ENCODE measurements at regions of chr2 and their contacts with region 1.

Region 1: DNA sequence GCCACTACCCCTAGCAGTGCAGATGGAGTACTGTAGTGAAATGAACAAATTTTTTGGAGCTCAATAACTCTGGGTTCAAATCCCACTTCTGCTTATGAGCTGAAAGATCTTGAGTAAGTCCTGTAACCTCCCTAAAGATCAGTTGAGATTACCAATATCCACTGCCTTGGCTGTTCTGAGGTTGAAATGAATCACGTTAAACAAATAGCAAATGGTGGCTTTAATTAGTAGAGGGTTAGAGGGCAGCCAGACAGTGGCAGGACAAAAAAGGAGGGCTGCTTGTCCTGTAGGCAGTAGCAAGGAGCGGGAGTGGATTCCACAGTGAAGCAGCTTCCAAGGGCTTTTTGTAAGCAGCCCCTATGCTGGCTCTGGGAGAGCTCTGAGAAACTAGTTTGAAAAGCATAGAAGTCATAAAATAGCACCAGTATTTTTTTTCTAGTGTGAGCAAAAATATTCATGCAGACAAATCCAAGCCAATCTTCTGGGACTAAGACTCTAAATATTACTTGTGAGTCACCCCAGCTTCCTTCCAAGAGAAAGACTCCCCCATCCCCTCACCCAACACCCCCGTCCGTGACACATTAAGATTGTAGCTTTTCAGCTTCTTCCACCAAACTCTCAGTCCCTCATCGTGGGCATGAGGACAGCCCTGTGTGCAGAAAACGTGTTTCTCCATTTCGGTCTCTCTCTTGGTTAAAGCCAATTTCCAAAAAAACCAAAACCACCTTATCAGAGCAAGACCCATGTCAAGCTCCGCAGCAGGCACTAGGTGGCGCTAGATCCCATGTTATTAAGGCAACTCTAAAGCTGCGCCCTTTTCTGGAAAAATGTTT is 123.5 kb upstream of the LGALSL start:
- DNase-seq: peak in 1 of 2 donors; percentile 88
- H3K4me3 ChIP-seq: peak overlapping the region; percentile 42 to 47
- H3K27ac ChIP-seq: peak overlapping the region; percentile 88 to 93
- H3K4me1 ChIP-seq: peaks cover 13 to 35% of the 10 kb centered on the region in 2 donors
- H3K27me3 ChIP-seq: no peaks in the 10 kb centered on the region
- CTCF ChIP-seq: peak; percentile 93 to 95 (median 95)

Region 2: DNA sequence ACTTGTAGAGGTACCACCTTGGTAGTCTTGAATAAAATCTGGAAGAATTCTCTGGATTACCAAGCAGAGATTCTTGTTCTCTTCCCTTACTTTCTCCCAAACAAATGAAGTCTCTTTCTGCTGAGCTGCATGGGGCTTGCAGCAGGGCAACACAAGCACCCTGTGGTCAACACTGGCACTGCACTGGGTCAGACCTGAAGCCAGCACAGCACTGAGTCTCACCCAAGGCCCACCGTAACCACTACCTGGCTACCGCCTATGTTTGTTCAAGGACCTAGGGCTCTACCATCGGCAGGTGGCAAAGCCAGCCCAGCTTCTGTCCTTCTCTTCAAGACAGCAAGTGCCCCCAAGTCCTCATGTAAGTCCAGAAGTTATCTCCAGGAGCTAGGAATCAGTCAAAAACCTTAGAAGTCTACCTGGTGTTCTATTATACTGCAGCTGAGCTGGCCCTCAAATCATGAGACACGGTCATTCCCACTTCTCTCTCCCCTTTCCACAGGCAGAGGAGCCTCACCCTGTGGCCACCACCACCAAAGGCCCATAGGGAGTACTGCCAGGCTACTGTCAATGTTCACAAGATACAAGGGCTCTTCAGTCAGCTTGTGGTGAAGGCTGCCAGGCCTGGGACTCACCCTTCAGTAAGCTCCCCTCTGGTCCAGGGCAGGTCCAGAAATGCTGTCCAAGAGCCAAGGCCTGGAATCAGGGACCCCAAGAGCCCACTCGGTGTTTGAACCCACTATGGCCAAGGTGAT is 329.7 kb before region 1 on chr2:
- intact Hi-C with region 1: no loop called
- DNase-seq: no peak
- H3K4me3 ChIP-seq: no peak overlapping the region
- H3K27ac ChIP-seq: no peak overlapping the region
- H3K4me1 ChIP-seq: no peaks in the 10 kb centered on the region
- H3K27me3 ChIP-seq: no peaks in the 10 kb centered on the region
- CTCF ChIP-seq: no peak

Region 3: GRCh38 chr2:64052468-64053241 is 277.8 kb before region 1 on chr2:
- intact Hi-C with region 1: loop called (anchors 1 kb)
- DNase-seq: no peak
- H3K4me3 ChIP-seq: no peak overlapping the region
- H3K27ac ChIP-seq: no peak overlapping the region
- H3K4me1 ChIP-seq: no peaks in the 10 kb centered on the region
- H3K27me3 ChIP-seq: no peaks in the 10 kb centered on the region
- CTCF ChIP-seq: no peak

Region 4: DNA sequence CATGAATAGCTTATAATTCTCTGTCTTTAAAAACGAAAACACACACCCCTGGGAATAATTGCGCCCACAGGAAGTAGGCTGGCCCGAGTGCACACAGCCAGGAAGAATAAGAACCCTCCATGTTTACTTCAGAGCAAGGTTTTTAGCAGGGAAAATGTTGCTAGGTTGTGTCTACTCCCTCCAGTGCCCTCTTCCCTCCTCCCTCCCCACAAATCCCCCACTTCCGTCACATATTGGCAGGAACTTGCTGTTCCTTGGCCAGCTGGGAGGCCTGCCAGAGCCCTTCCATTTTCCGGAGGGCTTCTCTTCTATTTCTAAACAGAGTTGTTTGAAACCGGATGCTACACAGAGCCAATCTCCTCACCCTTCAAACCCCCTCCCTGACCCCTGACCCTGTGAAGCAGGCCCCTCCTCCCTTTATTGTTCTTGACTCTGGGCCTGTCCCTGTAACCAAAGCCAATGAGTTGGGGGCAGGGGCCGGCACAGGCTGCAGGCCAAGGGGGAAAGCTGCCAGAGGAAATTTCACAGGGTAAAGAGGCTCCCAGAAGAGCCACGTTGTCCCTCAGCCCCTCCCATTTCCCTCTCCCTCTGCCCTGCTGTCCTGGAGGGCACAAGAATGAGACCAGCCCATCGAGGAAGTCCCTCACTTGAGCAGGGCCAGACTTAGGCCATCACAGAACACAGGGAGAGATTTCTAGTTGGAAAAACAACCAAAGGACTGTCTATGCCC is 73.7 kb after region 1 on chr2:
- intact Hi-C with region 1: loop called (anchors 2 kb)
- DNase-seq: peak; percentile 38 to 92
- H3K4me3 ChIP-seq: peak overlapping the region in 1 of 2 donors; percentile 32
- H3K27ac ChIP-seq: peak overlapping the region; percentile 91
- H3K4me1 ChIP-seq: peaks cover 18% of the 10 kb centered on the region in 2 donors
- H3K27me3 ChIP-seq: no peaks in the 10 kb centered on the region
- CTCF ChIP-seq: no peak

Region 5: DNA sequence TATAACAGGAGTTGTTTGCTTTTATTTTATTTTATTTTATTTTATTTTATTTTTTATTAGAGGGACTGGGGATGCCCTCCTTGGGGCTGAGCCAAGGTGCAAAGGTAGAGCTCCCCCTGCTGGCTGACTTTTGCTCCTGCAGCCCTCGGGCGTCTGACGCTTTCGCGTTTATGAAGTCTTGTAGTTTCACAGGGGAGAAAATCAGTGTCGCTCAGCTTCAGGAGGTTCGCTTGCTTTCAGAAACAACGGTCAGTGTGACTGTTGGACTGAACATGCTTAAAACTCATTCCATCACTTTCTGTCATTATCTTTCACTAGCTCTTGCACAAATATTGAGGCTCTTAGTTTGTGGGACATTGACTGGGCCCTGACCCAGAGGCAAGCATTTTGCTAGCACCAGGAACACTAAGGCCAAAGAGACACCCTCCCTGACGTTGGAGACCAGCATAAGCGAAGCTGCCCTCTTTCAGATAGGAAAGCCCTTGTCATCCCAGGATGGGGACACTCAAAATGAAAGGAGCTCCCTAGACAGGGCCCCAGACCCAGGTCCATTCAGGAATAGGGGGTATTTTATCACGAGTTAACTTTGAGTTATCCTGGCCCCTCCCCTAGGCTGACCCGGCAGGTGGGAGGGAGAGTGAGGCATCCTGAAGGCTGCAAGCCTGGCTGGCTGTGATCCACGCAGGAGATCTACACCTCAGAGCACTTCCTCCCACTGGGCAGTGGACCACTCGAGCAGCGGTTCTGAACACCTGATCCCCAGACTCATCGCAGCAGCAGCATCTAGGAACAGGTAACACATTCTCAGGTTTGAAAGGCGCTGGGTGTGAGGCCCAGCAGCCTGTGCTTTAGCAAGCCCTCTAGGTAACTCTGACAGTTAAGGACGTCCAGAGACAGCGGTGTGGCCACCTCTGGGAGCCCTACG is 157.8 kb after region 1 on chr2:
- intact Hi-C with region 1: loop called (anchors 1 kb)
- DNase-seq: peak in 1 of 2 donors; percentile 72
- H3K4me3 ChIP-seq: no peak overlapping the region
- H3K27ac ChIP-seq: no peak overlapping the region
- H3K4me1 ChIP-seq: peaks cover 0 to 17% of the 10 kb centered on the region in 2 donors
- H3K27me3 ChIP-seq: no peaks in the 10 kb centered on the region
- CTCF ChIP-seq: peak; percentile 80 to 97 (median 97)

Region 6: GRCh38 chr2:64554117-64554516 is 223.6 kb after region 1 on chr2:
- intact Hi-C with region 1: loop called (anchors 2 kb)
- DNase-seq: no peak
- H3K4me3 ChIP-seq: no peak overlapping the region
- H3K27ac ChIP-seq: peak overlapping the region; percentile 23 to 91
- H3K4me1 ChIP-seq: peaks cover 4 to 8% of the 10 kb centered on the region in 2 donors
- H3K27me3 ChIP-seq: no peaks in the 10 kb centered on the region
- CTCF ChIP-seq: no peak

Region 7: DNA sequence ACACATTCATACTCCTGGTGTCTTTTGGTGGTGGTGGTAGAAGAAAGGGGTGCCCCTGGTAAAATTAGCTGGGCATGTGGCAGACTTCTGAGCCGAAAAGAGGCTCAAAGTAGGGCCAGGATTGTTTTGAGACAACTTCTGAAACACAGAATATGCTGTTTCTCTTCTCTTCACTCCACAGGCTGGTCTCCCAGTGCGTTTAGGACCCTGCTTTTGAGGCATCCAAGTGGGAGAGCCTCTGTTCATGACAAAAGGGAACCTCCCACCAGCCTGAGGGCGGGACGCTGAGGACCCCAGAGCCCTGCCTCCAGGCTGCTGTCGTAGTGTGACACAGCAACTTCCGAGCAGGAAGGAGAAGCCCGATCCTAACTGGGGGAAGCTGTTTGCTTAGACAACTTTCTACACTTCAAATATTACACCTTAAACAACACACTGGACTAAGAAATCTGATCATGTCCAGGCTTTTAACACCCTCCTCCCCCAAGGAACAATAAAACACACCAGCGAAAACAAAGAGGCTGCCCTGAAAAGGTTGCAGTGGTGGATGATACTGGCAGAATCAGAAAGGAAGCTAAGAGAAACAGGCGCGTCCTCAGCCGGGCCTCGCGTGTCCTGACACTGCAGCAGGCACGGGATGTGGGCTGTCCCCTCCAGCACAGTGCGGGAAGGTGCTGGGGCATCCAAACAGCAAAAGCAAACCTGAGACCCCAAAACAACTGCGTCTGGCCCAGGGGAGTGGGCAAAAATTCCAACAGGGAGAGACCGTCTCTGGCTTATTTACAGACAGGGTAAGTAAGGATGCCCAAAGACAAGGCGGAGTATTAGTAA is 313.9 kb after region 1 on chr2:
- intact Hi-C with region 1: loop called (anchors 5 kb)
- DNase-seq: peak in 1 of 2 donors; percentile 88
- H3K4me3 ChIP-seq: peak overlapping the region; percentile 60 to 62
- H3K27ac ChIP-seq: peak overlapping the region; percentile 79 to 84
- H3K4me1 ChIP-seq: peaks cover 0 to 23% of the 10 kb centered on the region in 2 donors
- H3K27me3 ChIP-seq: no peaks in the 10 kb centered on the region
- CTCF ChIP-seq: no peak

Region 8: GRCh38 chr2:64750817-64751285 is 420.4 kb after region 1 on chr2:
- intact Hi-C with region 1: no loop called
- DNase-seq: peak; percentile 99 to 100
- H3K4me3 ChIP-seq: peak overlapping the region; percentile 87 to 90
- H3K27ac ChIP-seq: peak overlapping the region; percentile 96 to 98
- H3K4me1 ChIP-seq: peaks cover 0 to 18% of the 10 kb centered on the region in 2 donors
- H3K27me3 ChIP-seq: no peaks in the 10 kb centered on the region
- CTCF ChIP-seq: no peak

Region 9: GRCh38 chr2:64988420-64989125 is 658.1 kb after region 1 on chr2:
- intact Hi-C with region 1: loop called (anchors 2 kb)
- DNase-seq: peak in 1 of 2 donors; percentile 80
- H3K4me3 ChIP-seq: peak overlapping the region; percentile 99
- H3K27ac ChIP-seq: peak overlapping the region; percentile 97 to 99
- H3K4me1 ChIP-seq: peaks cover 0 to 27% of the 10 kb centered on the region in 2 donors
- H3K27me3 ChIP-seq: no peaks in the 10 kb centered on the region
- CTCF ChIP-seq: peak; percentile 53 to 55 (median 54)